ENCODE measurements at regions of chr7 and their contacts with region 1.

Region 1: GRCh38 chr7:132526111-132526740 is 50.0 kb downstream of the PLXNA4 start:
- DNase-seq: no peak
- H3K4me3 Mint-ChIP-seq: no peak overlapping the region
- H3K27ac Mint-ChIP-seq: peak overlapping the region; percentile 59
- H3K4me1 Mint-ChIP-seq: peaks cover 18% of the 10 kb centered on the region
- H3K27me3 Mint-ChIP-seq: peaks cover 6% of the 10 kb centered on the region

Region 2: DNA sequence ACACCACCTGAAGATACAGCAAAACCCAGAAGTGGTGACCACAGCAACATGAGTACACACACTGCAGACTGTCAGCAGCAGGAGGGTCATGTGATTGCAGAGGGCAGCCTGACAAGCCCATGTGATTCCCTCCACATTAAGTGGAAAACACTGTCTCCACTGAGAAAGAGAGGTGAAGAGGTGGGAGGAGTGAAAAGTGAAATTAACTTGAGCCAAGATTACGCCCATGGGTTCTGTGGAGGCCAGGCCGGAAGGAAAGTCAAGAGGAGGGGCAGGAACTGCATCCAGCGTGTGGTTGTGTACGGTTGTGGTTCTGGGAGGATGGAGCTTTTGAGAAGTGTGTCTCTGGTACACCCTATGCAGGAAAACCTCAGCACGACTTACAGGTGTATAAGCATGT is 88.5 kb before region 1 on chr7:
- intact Hi-C with region 1: loop called (anchors 1 kb)
- DNase-seq: peak; percentile 58
- H3K4me3 Mint-ChIP-seq: peak overlapping the region; percentile 6
- H3K27ac Mint-ChIP-seq: peak overlapping the region; percentile 68
- H3K4me1 Mint-ChIP-seq: peaks cover 81% of the 10 kb centered on the region
- H3K27me3 Mint-ChIP-seq: peaks cover 6% of the 10 kb centered on the region

Region 3: GRCh38 chr7:132451161-132451560 is 75.1 kb before region 1 on chr7:
- intact Hi-C with region 1: loop called (anchors 5 kb)
- DNase-seq: no peak
- H3K4me3 Mint-ChIP-seq: no peak overlapping the region
- H3K27ac Mint-ChIP-seq: peak overlapping the region; percentile 22
- H3K4me1 Mint-ChIP-seq: peaks cover 61% of the 10 kb centered on the region
- H3K27me3 Mint-ChIP-seq: peaks cover 11% of the 10 kb centered on the region

Region 4: GRCh38 chr7:133051066-133051465 is 524.8 kb after region 1 on chr7:
- intact Hi-C with region 1: no loop called
- DNase-seq: no peak
- H3K4me3 Mint-ChIP-seq: no peak overlapping the region
- H3K27ac Mint-ChIP-seq: no peak overlapping the region
- H3K4me1 Mint-ChIP-seq: no peaks in the 10 kb centered on the region
- H3K27me3 Mint-ChIP-seq: no peaks in the 10 kb centered on the region